A673 (cell line): ENCODE measurements at regions of chr17 and their contacts with region 1.

Region 1: DNA sequence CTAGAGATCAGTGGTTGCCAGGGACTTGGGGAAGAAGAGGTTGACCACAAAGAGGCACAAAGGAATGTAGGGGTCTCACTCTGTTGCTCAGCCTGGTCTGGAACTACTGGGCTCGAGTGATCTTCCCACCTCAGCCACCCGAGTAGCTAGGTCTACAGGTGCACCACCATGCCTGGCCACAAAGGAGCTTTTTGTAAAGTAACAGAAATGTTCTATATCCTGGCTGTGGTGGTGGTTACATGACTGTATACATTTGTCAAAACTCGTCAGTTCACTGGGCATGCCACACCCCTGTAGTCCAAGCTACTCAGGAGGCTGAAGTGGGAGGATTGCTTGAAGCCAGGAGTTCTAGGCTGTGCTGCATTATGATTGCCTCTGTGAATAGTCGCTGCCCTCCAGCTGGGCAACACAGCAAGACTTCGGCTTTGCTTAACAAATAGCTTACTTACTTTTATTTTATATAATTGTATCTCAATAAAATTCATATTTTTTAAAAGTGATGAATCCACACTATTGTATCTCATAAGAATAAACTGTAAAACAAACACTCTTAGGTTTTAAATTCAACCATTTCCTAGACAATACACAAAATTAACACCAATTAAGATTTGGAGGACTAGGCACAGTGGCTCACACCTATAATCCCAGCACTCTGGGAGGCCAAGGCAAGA is 5.0 kb downstream of the SKA2 start:
- DNase-seq: no peak
- H3K4me3 ChIP-seq: no peak overlapping the region
- H3K27ac ChIP-seq: no peak overlapping the region
- H3K4me1 ChIP-seq: peaks cover 10% of the 10 kb centered on the region
- H3K27me3 ChIP-seq: no peaks in the 10 kb centered on the region
- CTCF ChIP-seq: no peak

Region 2: DNA sequence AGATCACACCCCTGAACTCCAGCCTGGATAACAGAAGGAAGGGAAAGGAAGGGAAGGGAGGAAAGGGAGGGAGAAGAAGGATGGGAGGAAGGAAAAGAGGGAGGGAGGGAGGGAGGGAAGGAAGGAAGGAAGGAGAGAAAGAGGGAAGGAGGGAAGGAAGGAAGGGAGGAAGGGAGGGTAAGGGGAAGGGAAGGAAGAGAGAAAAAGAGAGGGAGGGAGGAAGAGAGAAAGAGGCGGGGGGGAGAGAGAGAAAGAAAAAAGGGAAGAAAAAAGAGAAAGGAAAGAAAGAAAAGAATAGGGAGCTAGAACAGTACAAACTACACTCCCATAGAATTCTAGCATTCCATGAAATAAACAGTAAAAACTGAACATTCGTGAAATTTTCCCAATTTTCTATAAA is 20.2 kb before region 1 on chr17:
- CTCF ChIA-PET with region 1: no interaction called
- POLR2A ChIA-PET with region 1: interaction called, 14 read pairs
- intact Hi-C with region 1: no loop called
- DNase-seq: no peak
- H3K4me3 ChIP-seq: no peak overlapping the region
- H3K27ac ChIP-seq: no peak overlapping the region
- H3K4me1 ChIP-seq: no peaks in the 10 kb centered on the region
- H3K27me3 ChIP-seq: no peaks in the 10 kb centered on the region
- CTCF ChIP-seq: no peak